ENCODE measurements at regions of chr4 and their contacts with region 1.

Region 1: GRCh38 chr4:118989098-118990080 is 100.7 kb downstream of the SYNPO2 start:
- DNase-seq: peak; percentile 91
- H3K4me3 Mint-ChIP-seq: peak overlapping the region; percentile 23
- H3K27ac Mint-ChIP-seq: peak overlapping the region; percentile 96
- H3K4me1 Mint-ChIP-seq: peaks cover 25% of the 10 kb centered on the region
- H3K27me3 Mint-ChIP-seq: no peaks in the 10 kb centered on the region
- CTCF ChIP-seq: no peak

Region 2: DNA sequence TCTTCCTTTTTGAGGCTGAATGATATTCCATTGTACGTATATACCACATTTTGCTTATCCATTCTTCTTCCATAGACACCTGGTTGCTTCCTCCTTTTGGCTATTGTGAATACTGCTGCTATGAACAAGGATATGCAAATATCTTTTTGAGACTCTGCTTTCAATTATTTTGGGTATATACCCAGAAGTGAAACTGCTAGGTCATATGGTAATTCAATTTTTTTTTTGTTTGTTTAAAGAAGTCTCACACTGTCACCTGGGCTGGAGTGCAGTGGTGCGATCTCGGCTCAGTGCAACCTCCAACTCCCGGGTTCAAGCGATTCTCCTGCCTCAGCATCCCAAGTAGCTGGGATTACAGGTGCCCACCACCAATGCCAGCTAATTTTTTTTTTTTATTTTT is 228.9 kb before region 1 on chr4:
- CTCF ChIA-PET with region 1: no interaction called
- POLR2A ChIA-PET with region 1: no interaction called
- intact Hi-C with region 1: no loop called
- DNase-seq: no peak
- H3K4me3 Mint-ChIP-seq: no peak overlapping the region
- H3K27ac Mint-ChIP-seq: no peak overlapping the region
- H3K4me1 Mint-ChIP-seq: peaks cover 20% of the 10 kb centered on the region
- H3K27me3 Mint-ChIP-seq: no peaks in the 10 kb centered on the region
- CTCF ChIP-seq: no peak

Region 3: GRCh38 chr4:118974758-118975157 is 14.6 kb before region 1 on chr4:
- CTCF ChIA-PET with region 1: interaction called, 28 read pairs
- POLR2A ChIA-PET with region 1: interaction called, 3 read pairs
- intact Hi-C with region 1: no loop called
- DNase-seq: no peak
- H3K4me3 Mint-ChIP-seq: no peak overlapping the region
- H3K27ac Mint-ChIP-seq: no peak overlapping the region
- H3K4me1 Mint-ChIP-seq: peaks cover 7% of the 10 kb centered on the region
- H3K27me3 Mint-ChIP-seq: no peaks in the 10 kb centered on the region
- CTCF ChIP-seq: no peak

Region 4: DNA sequence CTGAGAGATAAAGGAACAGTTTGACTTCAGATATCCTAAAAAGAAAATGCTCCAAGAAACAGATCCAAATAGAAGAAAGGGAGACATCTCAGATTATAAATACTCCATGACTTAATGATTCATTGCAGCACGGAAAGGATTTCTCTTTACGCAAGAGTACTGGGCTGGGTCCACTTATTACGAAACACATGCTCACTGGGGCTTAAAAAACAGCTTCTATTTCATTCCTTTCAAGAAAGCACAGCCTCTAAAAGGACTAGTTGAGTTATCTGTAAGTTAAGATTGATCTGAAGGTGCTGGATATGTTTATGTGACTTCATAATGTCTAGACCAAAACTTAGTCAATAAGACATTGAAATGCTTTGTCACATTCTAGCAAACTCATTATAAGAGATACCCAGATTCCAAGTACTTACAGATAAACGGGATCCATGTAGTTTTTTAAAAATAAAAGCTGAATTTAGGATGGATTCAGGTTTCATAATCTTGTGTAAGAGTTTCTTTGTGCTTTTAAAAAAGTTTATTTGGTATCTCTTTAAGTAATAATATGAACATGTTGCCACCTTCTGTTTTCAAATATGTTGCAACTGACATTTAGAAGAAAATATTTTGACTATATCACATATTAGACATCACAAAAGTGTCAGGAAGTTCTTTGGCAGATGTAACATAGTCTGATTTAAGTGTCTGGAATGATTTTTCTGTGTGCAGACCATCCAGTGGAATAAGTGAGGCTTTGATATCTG is 36.7 kb after region 1 on chr4:
- CTCF ChIA-PET with region 1: interaction called, 57 read pairs
- POLR2A ChIA-PET with region 1: interaction called, 152 read pairs
- intact Hi-C with region 1: loop called (anchors 1 kb)
- DNase-seq: peak; percentile 88
- H3K4me3 Mint-ChIP-seq: peak overlapping the region; percentile 62
- H3K27ac Mint-ChIP-seq: peak overlapping the region; percentile 95
- H3K4me1 Mint-ChIP-seq: peaks cover 10% of the 10 kb centered on the region
- H3K27me3 Mint-ChIP-seq: no peaks in the 10 kb centered on the region
- CTCF ChIP-seq: peak; percentile 6

Region 5: DNA sequence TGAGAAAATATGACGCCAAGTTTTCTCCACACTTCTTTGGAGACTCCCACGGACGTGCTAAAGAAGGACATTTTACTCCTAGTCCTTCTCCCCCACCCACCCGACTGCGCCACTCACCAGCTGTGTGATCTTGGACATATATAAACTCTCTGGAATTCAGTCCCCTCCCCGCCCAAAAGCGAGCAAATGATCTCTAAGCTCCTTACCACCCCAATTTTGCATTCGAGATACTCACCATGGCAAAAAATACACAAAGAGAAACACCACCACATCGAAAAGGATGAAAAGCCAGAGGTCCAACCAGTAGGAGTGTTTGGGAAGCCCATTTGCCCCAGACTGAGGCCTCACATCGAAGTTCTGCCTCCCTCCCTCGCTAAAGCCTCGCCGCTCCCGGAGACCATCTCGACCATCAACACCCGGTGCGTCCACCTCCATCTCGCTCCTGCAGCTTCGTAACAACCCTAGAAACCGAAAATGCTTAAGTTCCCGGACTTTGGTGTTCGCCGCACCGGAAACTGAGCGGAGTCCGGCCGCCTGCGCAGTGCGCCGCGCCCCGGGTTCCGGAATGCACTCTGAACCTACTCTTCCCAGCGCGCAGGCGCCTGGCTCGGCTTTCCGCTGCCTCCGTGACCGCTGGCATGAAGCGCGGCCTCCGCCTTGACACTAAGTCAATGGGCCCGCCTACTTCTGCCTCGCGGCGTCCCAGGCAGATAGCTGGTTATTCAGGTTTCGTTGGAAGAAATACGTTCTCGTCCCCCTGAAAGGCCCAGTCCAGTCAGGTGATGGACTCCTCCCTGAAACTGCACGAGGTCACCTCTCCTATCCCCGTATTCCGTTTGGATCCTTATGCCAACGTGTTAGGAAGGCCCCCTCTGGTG is 311.0 kb after region 1 on chr4:
- CTCF ChIA-PET with region 1: interaction called, 6 read pairs
- POLR2A ChIA-PET with region 1: interaction called, 26 read pairs
- intact Hi-C with region 1: no loop called
- DNase-seq: peak; percentile 92
- H3K4me3 Mint-ChIP-seq: peak overlapping the region; percentile 93
- H3K27ac Mint-ChIP-seq: peak overlapping the region; percentile 97
- H3K4me1 Mint-ChIP-seq: peaks cover 12% of the 10 kb centered on the region
- H3K27me3 Mint-ChIP-seq: no peaks in the 10 kb centered on the region
- CTCF ChIP-seq: no peak